CD14-positive monocyte (primary cell): ENCODE measurements at regions of chr10 and their contacts with region 1.

Region 1: DNA sequence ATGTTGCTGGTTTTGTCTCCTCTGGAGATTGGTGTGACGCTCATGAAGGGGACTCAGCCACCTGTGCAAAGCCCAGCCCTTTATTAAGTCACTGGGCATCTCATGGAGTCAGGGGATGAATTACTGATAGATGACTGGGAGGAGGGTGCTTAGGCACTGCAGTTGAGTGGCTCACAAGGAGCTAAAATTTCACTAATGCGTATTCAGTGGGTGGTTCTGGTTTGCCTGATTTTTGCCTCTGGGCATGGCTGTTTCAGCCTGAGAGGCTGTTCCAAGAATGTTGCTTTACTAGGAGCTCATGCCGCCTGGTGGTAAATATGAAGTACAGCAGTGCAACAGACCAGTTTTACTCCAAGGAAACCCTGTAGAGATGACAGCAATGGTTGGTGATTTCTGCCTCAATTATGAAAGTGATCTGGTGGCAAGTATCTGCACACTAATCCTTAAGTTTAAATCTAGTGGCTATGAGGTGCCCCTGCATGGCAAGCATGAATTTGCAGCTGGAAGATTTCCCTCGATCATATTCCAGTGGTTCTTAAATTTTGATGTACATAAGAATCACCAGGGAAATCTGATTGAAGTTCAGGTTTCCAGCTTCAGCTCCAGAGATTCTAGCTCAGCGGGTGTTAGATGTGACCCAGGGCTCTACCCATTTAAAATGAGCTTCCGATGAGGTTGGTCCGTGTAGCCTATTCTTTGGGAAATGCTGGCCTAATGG is 19.9 kb downstream of the ACTA2 start:
- DNase-seq: peak; percentile 38 to 64 (median 63)
- H3K4me3 ChIP-seq: no peak overlapping the region
- H3K4me3 Mint-ChIP-seq: peak overlapping the region in 1 of 2 donors; percentile 28
- H3K27ac ChIP-seq: no peak overlapping the region
- H3K27ac Mint-ChIP-seq: peak overlapping the region in 1 of 7 donors; percentile 18
- H3K4me1 ChIP-seq: peaks cover 9% of the 10 kb centered on the region in 2 donors
- H3K4me1 Mint-ChIP-seq: peaks cover 11% of the 10 kb centered on the region
- H3K27me3 ChIP-seq: no peaks in the 10 kb centered on the region
- H3K27me3 Mint-ChIP-seq: peaks cover 0 to 3% (median 0%) of the 10 kb centered on the region in 3 donors
- CTCF ChIP-seq: peak; percentile 77

Region 2: DNA sequence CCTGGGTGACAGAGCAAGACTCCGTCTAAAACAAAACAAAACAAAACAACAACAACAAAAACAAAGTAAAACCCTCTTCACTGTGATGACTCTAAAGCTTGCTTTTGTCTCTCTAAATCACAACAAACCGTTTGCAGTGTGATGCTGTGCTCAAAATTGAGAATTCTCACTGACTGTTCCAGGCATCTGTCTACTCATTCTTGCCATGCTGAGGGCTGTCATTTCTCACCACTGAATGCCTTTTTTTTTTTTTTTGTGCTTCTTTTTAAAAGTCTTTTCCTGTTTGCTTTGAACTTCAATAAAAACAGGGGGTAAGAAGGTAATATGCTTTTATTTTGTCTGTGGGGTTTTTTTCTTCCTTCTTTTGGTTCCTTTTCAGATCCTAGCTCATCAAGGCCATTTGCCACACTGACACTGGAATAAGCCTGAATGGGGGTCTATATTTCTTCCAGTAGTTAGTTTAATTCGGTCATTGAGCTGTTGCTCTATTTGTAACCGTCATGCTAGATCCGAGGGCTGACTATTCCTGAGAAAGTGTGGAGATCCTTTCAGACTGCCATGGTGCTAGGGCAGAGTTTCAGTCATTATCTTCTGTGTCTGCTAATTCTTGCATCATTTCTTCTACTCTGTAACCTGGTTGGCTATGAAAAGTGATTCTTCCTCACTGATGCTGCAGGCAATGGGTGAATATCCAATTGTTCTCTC is 68.5 kb after region 1 on chr10:
- intact Hi-C with region 1: loop called in 1 of 2 experiments (anchors 5 kb)
- DNase-seq: no peak
- H3K4me3 ChIP-seq: no peak overlapping the region
- H3K4me3 Mint-ChIP-seq: peak overlapping the region in 1 of 2 donors; percentile 4
- H3K27ac ChIP-seq: no peak overlapping the region
- H3K27ac Mint-ChIP-seq: peak overlapping the region in 6 of 7 donors; percentile 26 to 80 (median 66)
- H3K4me1 ChIP-seq: peaks cover 8 to 20% of the 10 kb centered on the region in 2 donors
- H3K4me1 Mint-ChIP-seq: peaks cover 37% of the 10 kb centered on the region
- H3K27me3 ChIP-seq: no peaks in the 10 kb centered on the region
- H3K27me3 Mint-ChIP-seq: no peaks in the 10 kb centered on the region
- CTCF ChIP-seq: no peak

Region 3: GRCh38 chr10:89217057-89217990 is 284.6 kb after region 1 on chr10:
- intact Hi-C with region 1: loop called (anchors 5 kb)
- DNase-seq: peak; percentile 45 to 67 (median 53)
- H3K4me3 ChIP-seq: no peak overlapping the region
- H3K4me3 Mint-ChIP-seq: no peak overlapping the region
- H3K27ac ChIP-seq: peak overlapping the region in 1 of 2 donors; percentile 31
- H3K27ac Mint-ChIP-seq: peak overlapping the region in 3 of 7 donors; percentile 20 to 68 (median 61)
- H3K4me1 ChIP-seq: peaks cover 5 to 10% of the 10 kb centered on the region in 2 donors
- H3K4me1 Mint-ChIP-seq: peaks cover 9% of the 10 kb centered on the region
- H3K27me3 ChIP-seq: no peaks in the 10 kb centered on the region
- H3K27me3 Mint-ChIP-seq: peaks cover 0 to 2% (median 0%) of the 10 kb centered on the region in 3 donors
- CTCF ChIP-seq: peak; percentile 78